CD4-positive, alpha-beta memory T cell (primary cell): ENCODE measurements at regions of chr9 and their contacts with region 1.

Region 1: GRCh38 chr9:128034821-128035764 is 32.0 kb downstream of the NAIF1 start:
- DNase-seq: peak; percentile 78 to 82 (median 80)
- H3K4me3 ChIP-seq: no peak overlapping the region
- H3K4me3 Mint-ChIP-seq: peak overlapping the region; percentile 11 to 84 (median 64)
- H3K27ac ChIP-seq: peak overlapping the region; percentile 15
- H3K27ac Mint-ChIP-seq: peak overlapping the region; percentile 87 to 95 (median 92)
- H3K4me1 ChIP-seq: peaks cover 51% of the 10 kb centered on the region
- H3K4me1 Mint-ChIP-seq: peaks cover 19 to 46% (median 32%) of the 10 kb centered on the region in 4 donors
- H3K27me3 ChIP-seq: no peaks in the 10 kb centered on the region
- H3K27me3 Mint-ChIP-seq: no peaks in the 10 kb centered on the region

Region 2: GRCh38 chr9:127916665-127917613 is 118.2 kb before region 1 on chr9 and contains the start of gene ST6GALNAC4:
- CTCF ChIA-PET with region 1: interaction called, 14 read pairs
- POLR2A ChIA-PET with region 1: interaction called, 6 read pairs
- intact Hi-C with region 1: no loop called
- DNase-seq: peak; percentile 90 to 93 (median 91)
- H3K4me3 ChIP-seq: peak within 1 kb of the TSS; percentile 66 to 76
- H3K4me3 Mint-ChIP-seq: peak within 1 kb of the TSS; percentile 78 to 88 (median 84)
- H3K27ac ChIP-seq: peak within 1 kb of the TSS; percentile 52
- H3K27ac Mint-ChIP-seq: peak within 1 kb of the TSS; percentile 63 to 84 (median 79)
- H3K4me1 ChIP-seq: peaks cover 38% of the 10 kb centered on the region
- H3K4me1 Mint-ChIP-seq: peaks cover 12 to 65% (median 39%) of the 10 kb centered on the region in 4 donors
- H3K27me3 ChIP-seq: no peaks in the 10 kb centered on the region
- H3K27me3 Mint-ChIP-seq: no peaks in the 10 kb centered on the region
- total RNA-seq, gene ST6GALNAC4: 35.7 to 38.1 TPM

Region 3: GRCh38 chr9:127955294-127956035 is 79.6 kb before region 1 on chr9:
- CTCF ChIA-PET with region 1: interaction called, 300 read pairs
- POLR2A ChIA-PET with region 1: interaction called, 1,317 read pairs
- intact Hi-C with region 1: loop called (anchors 1 kb)
- DNase-seq: peak; percentile 72 to 94 (median 73)
- H3K4me3 ChIP-seq: peak overlapping the region in 1 of 2 donors; percentile 2
- H3K4me3 Mint-ChIP-seq: peak overlapping the region; percentile 43 to 80 (median 80)
- H3K27ac ChIP-seq: peak overlapping the region; percentile 57
- H3K27ac Mint-ChIP-seq: peak overlapping the region; percentile 86 to 97 (median 93)
- H3K4me1 ChIP-seq: peaks cover 97% of the 10 kb centered on the region
- H3K4me1 Mint-ChIP-seq: peaks cover 48 to 92% (median 76%) of the 10 kb centered on the region in 4 donors
- H3K27me3 ChIP-seq: no peaks in the 10 kb centered on the region
- H3K27me3 Mint-ChIP-seq: no peaks in the 10 kb centered on the region

Region 4: GRCh38 chr9:127987103-127987614 is 47.9 kb before region 1 on chr9:
- CTCF ChIA-PET with region 1: interaction called, 182 read pairs
- POLR2A ChIA-PET with region 1: interaction called, 1,317 read pairs
- intact Hi-C with region 1: no loop called
- DNase-seq: no peak
- H3K4me3 ChIP-seq: no peak overlapping the region
- H3K4me3 Mint-ChIP-seq: no peak overlapping the region
- H3K27ac ChIP-seq: no peak overlapping the region
- H3K27ac Mint-ChIP-seq: peak overlapping the region in 1 of 7 donors; percentile 31
- H3K4me1 ChIP-seq: peaks cover 27% of the 10 kb centered on the region
- H3K4me1 Mint-ChIP-seq: peaks cover 25 to 34% (median 30%) of the 10 kb centered on the region in 4 donors
- H3K27me3 ChIP-seq: no peaks in the 10 kb centered on the region
- H3K27me3 Mint-ChIP-seq: no peaks in the 10 kb centered on the region

Region 5: DNA sequence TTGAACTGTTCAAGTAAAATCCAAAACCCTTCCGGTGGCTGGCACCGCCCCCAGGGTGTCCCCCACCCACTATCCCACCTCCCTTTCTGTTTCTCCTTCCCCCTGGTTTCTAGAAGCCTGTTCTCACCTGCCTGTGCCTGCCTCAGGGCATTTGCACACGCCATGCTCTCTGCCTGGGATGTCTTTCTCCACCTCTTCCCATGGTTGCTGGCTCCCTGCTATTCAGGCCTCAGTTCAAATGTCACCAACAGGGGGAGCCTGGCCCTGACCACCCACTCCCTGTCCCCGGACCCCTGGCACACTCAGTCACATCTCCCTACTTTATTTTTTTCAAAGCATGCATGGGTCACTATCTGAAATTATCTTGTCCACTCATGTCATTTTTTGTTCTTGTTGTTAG is 14.4 kb before region 1 on chr9:
- CTCF ChIA-PET with region 1: interaction called, 38 read pairs
- POLR2A ChIA-PET with region 1: interaction called, 27 read pairs
- intact Hi-C with region 1: no loop called
- DNase-seq: no peak
- H3K4me3 ChIP-seq: no peak overlapping the region
- H3K4me3 Mint-ChIP-seq: peak overlapping the region in 1 of 8 donors; percentile 77
- H3K27ac ChIP-seq: no peak overlapping the region
- H3K27ac Mint-ChIP-seq: peak overlapping the region; percentile 31 to 100 (median 94)
- H3K4me1 ChIP-seq: peaks cover 55% of the 10 kb centered on the region
- H3K4me1 Mint-ChIP-seq: peaks cover 44 to 71% (median 52%) of the 10 kb centered on the region in 4 donors
- H3K27me3 ChIP-seq: no peaks in the 10 kb centered on the region
- H3K27me3 Mint-ChIP-seq: no peaks in the 10 kb centered on the region

Region 6: DNA sequence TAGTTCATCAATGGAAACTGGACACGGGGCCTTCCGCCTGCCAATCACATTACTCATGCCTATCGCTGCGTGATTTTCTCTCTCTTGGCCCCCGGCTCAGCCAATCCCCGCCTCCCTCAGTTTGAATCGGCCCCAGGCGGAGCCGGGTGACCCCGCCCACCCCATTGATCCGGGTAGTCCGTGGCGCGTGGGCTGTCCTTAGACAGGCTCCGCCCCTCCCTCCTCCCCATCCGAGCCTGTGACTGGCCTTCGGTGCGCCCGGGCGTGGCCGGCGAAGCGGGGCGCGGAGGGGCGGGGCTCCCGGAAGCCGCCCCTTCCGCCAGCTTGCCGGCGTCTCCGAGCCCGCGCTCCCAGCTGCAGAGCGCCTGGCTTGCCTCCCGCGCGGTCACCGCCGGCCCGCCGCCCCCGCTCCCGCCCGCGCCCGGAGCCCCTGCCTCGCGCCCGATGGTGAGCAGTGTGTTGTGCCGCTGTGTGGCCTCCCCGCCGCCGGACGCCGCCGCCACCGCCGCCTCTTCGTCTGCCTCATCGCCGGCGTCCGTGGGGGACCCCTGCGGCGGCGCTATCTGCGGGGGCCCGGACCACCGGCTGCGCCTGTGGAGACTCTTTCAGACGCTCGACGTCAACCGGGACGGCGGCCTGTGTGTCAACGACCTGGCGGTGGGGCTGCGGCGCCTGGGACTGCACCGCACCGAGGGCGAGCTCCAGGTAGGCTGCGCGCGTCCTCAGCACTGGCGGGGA is 33.0 kb after region 1 on chr9 and contains the start of gene SLC25A25:
- CTCF ChIA-PET with region 1: interaction called, 15 read pairs
- POLR2A ChIA-PET with region 1: interaction called, 13 read pairs
- intact Hi-C with region 1: no loop called
- DNase-seq: peak; percentile 100
- H3K4me3 ChIP-seq: peak within 1 kb of the TSS; percentile 87 to 92
- H3K4me3 Mint-ChIP-seq: peak within 1 kb of the TSS in 7 of 8 donors; percentile 89 to 98 (median 94)
- H3K27ac ChIP-seq: peak within 1 kb of the TSS; percentile 86
- H3K27ac Mint-ChIP-seq: peak within 1 kb of the TSS; percentile 83 to 97 (median 91)
- H3K4me1 ChIP-seq: peaks cover 80% of the 10 kb centered on the region
- H3K4me1 Mint-ChIP-seq: peaks cover 36 to 56% (median 45%) of the 10 kb centered on the region in 4 donors
- H3K27me3 ChIP-seq: no peaks in the 10 kb centered on the region
- H3K27me3 Mint-ChIP-seq: no peaks in the 10 kb centered on the region
- total RNA-seq, gene SLC25A25: 22.0 to 26.9 TPM